Sigmoid colon (tissue), 7 donors: ENCODE measurements at regions of chr6 and their contacts with region 1.

Region 1: DNA sequence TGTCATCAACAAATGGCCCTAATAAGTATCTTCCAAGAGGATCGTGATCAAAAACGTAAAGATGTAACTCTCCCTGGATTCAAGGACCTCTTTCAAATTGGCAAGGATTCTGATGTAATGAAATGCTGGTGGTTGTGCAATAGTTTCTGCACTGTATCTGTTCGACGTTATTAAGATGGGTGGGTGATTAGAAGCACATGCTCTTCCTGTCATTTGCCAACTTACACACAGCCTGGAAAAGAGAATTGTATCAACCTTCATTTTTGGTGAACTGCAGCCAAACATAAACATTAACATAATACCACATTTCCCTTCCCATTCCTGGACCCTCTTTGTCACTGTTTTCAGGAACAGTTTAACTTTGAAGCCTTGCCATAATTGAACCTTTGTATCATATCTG is 9.9 kb downstream of the FOXQ1 start:
- DNase-seq: no peak
- H3K4me3 ChIP-seq: no peak overlapping the region
- H3K27ac ChIP-seq: peak overlapping the region in 1 of 4 donors; percentile 48
- H3K4me1 ChIP-seq: no peaks in the 10 kb centered on the region
- H3K27me3 ChIP-seq: peaks cover 0 to 5% (median 0%) of the 10 kb centered on the region in 3 donors
- CTCF ChIP-seq: no peak
- EP300 ChIP-seq: no peak
- POLR2A ChIP-seq: no peak

Region 2: GRCh38 chr6:1001655-1002349 is 320.0 kb before region 1 on chr6:
- intact Hi-C with region 1: no loop called
- DNase-seq: no peak
- H3K4me3 ChIP-seq: no peak overlapping the region
- H3K27ac ChIP-seq: no peak overlapping the region
- H3K4me1 ChIP-seq: no peaks in the 10 kb centered on the region
- H3K27me3 ChIP-seq: no peaks in the 10 kb centered on the region
- CTCF ChIP-seq: no peak
- EP300 ChIP-seq: no peak
- POLR2A ChIP-seq: no peak

Region 3: DNA sequence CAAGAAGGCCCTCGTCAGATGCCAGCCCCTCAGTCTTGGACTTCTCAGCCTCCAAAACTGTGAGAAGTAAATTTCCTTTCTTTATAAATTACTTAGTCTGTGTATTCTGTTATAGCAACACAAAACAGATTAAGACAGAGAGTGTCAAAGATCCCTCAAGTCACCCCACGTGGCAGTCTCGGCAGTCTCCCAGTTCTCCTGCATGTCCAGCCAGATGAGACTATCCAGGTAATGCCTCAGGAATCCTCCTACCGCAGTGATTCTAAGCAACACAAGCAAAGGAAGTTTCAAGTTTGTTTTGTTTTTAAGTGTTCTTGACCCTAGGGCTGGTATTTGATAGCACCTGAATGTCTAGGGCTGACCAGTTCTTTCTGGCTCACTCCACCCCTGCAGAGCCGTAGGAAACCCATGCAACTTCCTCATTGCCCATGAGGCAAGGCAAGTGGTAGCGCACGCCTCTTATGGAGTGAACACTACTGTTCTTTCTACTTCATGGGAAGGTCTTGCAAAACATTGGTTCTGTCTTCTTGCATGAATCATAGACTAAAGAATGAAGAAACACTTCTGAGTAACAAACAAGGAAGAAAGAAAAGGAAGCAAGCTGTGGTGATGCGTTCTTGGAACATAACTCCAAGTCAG is 34.7 kb before region 1 on chr6:
- intact Hi-C with region 1: no loop called
- DNase-seq: no peak
- H3K4me3 ChIP-seq: no peak overlapping the region
- H3K27ac ChIP-seq: no peak overlapping the region
- H3K4me1 ChIP-seq: no peaks in the 10 kb centered on the region
- H3K27me3 ChIP-seq: peaks cover 0 to 7% (median 0%) of the 10 kb centered on the region in 3 donors
- CTCF ChIP-seq: no peak
- EP300 ChIP-seq: no peak
- POLR2A ChIP-seq: no peak

Region 4: DNA sequence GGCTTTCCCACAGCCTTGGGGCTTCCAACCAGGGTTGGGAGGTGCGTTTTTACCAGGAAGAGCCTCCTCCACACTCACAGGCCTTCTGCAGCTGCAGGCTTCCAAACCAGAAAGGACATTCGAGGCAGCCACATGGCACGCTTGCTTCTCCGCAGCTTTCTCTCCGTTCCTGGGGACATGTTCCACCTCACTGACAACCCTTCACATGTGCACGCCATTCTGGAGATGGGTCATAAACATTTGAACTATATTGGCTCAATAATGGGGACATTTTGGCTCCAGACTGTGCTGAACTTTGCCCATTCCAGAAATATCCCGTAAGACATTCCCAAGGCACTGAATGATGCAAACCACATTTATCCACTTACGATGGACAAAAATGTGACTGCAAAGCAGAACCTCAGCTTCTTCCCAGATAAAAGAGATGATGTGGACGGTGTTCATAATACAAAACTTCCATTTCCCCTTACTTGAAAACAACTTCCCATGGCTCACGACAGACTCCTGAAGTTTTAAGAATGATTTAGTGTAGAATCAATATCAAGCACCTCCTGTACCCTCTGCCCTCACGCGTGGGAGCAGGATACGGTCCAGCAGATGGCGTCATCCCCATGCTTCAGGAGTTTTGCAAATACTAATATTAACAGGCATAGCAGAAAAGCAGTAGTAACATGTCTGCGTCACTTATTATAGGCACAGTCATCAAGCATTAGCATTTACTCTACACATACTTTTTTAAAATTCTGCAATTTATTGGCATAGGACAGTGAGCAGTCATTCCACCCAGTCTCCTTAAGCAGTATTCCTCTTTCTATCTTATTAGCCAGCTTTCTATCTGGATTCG is 42.2 kb after region 1 on chr6:
- intact Hi-C with region 1: loop called (anchors 5 kb)
- DNase-seq: peak; percentile 72
- H3K4me3 ChIP-seq: no peak overlapping the region
- H3K27ac ChIP-seq: peak overlapping the region; percentile 40 to 79 (median 46)
- H3K4me1 ChIP-seq: peaks cover 0 to 14% (median 12%) of the 10 kb centered on the region in 4 donors
- H3K27me3 ChIP-seq: no peaks in the 10 kb centered on the region
- CTCF ChIP-seq: no peak
- EP300 ChIP-seq: no peak
- POLR2A ChIP-seq: no peak

Region 5: GRCh38 chr6:1624851-1625781 is 303.4 kb after region 1 on chr6:
- intact Hi-C with region 1: no loop called
- DNase-seq: no peak
- H3K4me3 ChIP-seq: peak overlapping the region; percentile 23 to 50 (median 43)
- H3K27ac ChIP-seq: peak overlapping the region in 1 of 4 donors; percentile 72
- H3K4me1 ChIP-seq: peaks cover 0 to 21% (median 20%) of the 10 kb centered on the region in 4 donors
- H3K27me3 ChIP-seq: peaks cover 43 to 99% (median 97%) of the 10 kb centered on the region in 3 donors
- CTCF ChIP-seq: no peak
- EP300 ChIP-seq: no peak
- POLR2A ChIP-seq: no peak